B cell (primary cell): ENCODE measurements at regions of chr18 and their contacts with region 1.

Region 1: GRCh38 chr18:79465392-79465991 is 69.8 kb downstream of the NFATC1 start:
- DNase-seq: peak; percentile 80
- ATAC-seq: peak; percentile 65
- H3K4me3 ChIP-seq: peak overlapping the region in 4 of 5 experiments; percentile 51 to 61 (median 56)
- H3K4me3 Mint-ChIP-seq: peak overlapping the region; percentile 88
- H3K27ac ChIP-seq: peak overlapping the region; percentile 97 to 98
- H3K27ac Mint-ChIP-seq: peak overlapping the region; percentile 95
- H3K4me1 ChIP-seq: peaks cover 56 to 81% of the 10 kb centered on the region in 2 donors
- H3K4me1 Mint-ChIP-seq: peaks cover 67% of the 10 kb centered on the region
- H3K27me3 ChIP-seq: no peaks in the 10 kb centered on the region
- H3K27me3 Mint-ChIP-seq: no peaks in the 10 kb centered on the region
- CTCF ChIP-seq: no peak

Region 2: DNA sequence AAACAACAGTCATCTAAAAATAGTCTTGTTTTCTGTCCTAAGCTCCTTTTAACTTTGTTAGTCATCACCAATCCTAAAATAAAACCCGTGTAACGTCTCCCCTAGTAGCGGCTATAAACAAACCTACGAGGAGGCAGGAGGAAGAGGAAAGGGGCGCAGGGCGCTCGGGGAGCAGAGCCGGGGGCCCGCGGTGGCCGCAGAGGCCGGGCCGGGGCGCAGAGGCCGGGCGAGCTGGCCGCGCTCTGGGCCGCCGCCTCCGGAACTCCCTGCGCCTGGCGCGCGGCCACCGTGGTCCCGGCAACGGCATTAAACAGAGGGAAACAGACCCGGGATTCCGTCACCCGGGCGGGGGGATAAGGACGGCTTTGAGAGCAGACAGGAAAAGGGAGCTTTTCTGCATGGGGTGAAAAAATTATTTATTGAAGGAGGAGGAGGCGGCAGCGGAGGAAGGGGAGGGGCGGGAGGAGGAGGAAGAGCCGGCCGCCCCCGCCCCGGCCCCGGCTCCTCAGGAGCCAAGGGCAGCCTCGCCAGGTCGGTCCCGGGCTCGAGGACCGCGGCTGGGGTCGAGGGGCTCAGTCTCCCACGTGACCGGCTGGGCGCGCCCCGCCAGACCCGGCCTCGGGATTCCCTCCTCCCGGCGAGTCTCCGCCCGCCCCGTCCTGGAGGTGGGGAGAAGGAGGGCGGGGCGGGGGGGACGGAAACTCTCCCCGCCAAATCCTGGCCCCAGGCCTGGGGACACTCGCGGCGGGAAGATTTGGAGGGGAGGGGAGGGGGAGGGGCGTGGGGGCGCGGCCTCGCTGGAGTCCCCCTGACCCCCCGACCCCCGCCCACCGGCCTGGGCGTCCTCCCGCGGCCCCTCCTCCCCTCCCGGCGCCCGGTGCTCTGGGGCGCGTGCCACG is 71.6 kb before region 1 on chr18:
- CTCF ChIA-PET with region 1: interaction called, 10 read pairs
- POLR2A ChIA-PET with region 1: interaction called, 10 read pairs
- intact Hi-C with region 1: loop called (anchors 5 kb)
- DNase-seq: peak; percentile 65
- ATAC-seq: peak; percentile 18
- H3K4me3 ChIP-seq: peak overlapping the region in 4 of 5 experiments; percentile 42 to 78 (median 60)
- H3K4me3 Mint-ChIP-seq: peak overlapping the region; percentile 85
- H3K27ac ChIP-seq: peak overlapping the region; percentile 49 to 66
- H3K27ac Mint-ChIP-seq: peak overlapping the region; percentile 74
- H3K4me1 ChIP-seq: peaks cover 38 to 45% of the 10 kb centered on the region in 2 donors
- H3K4me1 Mint-ChIP-seq: peaks cover 36% of the 10 kb centered on the region
- H3K27me3 ChIP-seq: peaks cover 0 to 3% (median 0%) of the 10 kb centered on the region in 4 experiments
- H3K27me3 Mint-ChIP-seq: no peaks in the 10 kb centered on the region
- CTCF ChIP-seq: no peak

Region 3: DNA sequence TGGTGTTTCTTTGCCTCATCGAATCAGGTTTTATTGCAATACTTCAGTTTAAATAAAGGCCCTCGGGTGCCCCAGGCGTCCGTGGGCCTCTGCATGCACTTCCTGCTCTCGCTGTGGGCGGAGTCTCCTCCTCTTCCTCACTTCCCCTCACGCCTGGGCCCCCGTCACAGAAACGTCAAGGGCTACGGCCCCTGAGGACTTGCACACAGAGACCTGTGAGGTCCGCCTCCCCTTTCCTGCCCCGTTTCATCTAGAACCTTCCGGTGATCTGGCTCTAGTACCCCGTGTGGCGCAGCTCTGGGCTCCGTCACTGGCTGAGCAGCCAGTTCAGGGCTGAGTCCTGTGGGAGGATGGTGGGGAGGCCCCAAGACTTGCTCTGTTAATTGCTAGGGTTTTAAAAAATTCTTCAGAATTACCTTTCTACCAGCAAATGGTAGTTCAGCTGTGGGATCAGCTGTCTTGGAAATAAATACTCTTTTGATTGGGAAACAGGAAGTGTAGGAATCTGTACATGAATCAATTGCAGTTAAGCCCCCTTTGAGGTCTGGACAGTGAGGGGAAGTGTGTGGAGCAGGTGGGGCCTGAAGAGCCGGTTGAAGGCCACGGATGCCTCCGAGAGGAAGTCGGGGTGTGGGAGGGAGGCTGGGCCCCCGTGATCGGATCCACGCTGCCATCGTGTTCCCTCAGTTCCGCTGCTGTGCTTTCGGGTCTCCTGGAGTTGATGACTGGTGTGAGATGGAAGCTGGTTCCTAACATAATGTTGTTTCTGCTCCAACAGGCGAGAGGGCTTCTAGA is 59.5 kb before region 1 on chr18:
- CTCF ChIA-PET with region 1: interaction called, 8 read pairs
- POLR2A ChIA-PET with region 1: interaction called, 8 read pairs
- intact Hi-C with region 1: loop called (anchors 1 kb)
- DNase-seq: peak; percentile 96
- ATAC-seq: peak; percentile 89
- H3K4me3 ChIP-seq: peak overlapping the region; percentile 19 to 45 (median 35)
- H3K4me3 Mint-ChIP-seq: peak overlapping the region; percentile 79
- H3K27ac ChIP-seq: peak overlapping the region; percentile 91 to 97
- H3K27ac Mint-ChIP-seq: peak overlapping the region; percentile 92
- H3K4me1 ChIP-seq: peaks cover 60 to 63% of the 10 kb centered on the region in 2 donors
- H3K4me1 Mint-ChIP-seq: peaks cover 71% of the 10 kb centered on the region
- H3K27me3 ChIP-seq: no peaks in the 10 kb centered on the region
- H3K27me3 Mint-ChIP-seq: no peaks in the 10 kb centered on the region
- CTCF ChIP-seq: no peak

Region 4: GRCh38 chr18:79496978-79497637 is 31.6 kb after region 1 on chr18:
- CTCF ChIA-PET with region 1: interaction called, 12 read pairs
- POLR2A ChIA-PET with region 1: interaction called, 9 read pairs
- intact Hi-C with region 1: loop called (anchors 1 kb)
- DNase-seq: peak; percentile 82
- ATAC-seq: peak; percentile 80
- H3K4me3 ChIP-seq: peak overlapping the region in 1 of 5 experiments; percentile 7
- H3K4me3 Mint-ChIP-seq: peak overlapping the region; percentile 80
- H3K27ac ChIP-seq: peak overlapping the region; percentile 68
- H3K27ac Mint-ChIP-seq: peak overlapping the region; percentile 84
- H3K4me1 ChIP-seq: peaks cover 32% of the 10 kb centered on the region in 2 donors
- H3K4me1 Mint-ChIP-seq: peaks cover 33% of the 10 kb centered on the region
- H3K27me3 ChIP-seq: no peaks in the 10 kb centered on the region
- H3K27me3 Mint-ChIP-seq: no peaks in the 10 kb centered on the region
- CTCF ChIP-seq: no peak

Region 5: GRCh38 chr18:79523736-79524180 is 58.3 kb after region 1 on chr18:
- CTCF ChIA-PET with region 1: interaction called, 4 read pairs
- POLR2A ChIA-PET with region 1: interaction called, 22 read pairs
- intact Hi-C with region 1: loop called (anchors 1 kb)
- DNase-seq: peak; percentile 92
- ATAC-seq: peak; percentile 57
- H3K4me3 ChIP-seq: peak overlapping the region in 4 of 5 experiments; percentile 37 to 46 (median 42)
- H3K4me3 Mint-ChIP-seq: peak overlapping the region; percentile 76
- H3K27ac ChIP-seq: peak overlapping the region; percentile 96
- H3K27ac Mint-ChIP-seq: peak overlapping the region; percentile 85
- H3K4me1 ChIP-seq: peaks cover 54 to 68% of the 10 kb centered on the region in 2 donors
- H3K4me1 Mint-ChIP-seq: peaks cover 67% of the 10 kb centered on the region
- H3K27me3 ChIP-seq: no peaks in the 10 kb centered on the region
- H3K27me3 Mint-ChIP-seq: no peaks in the 10 kb centered on the region
- CTCF ChIP-seq: no peak